Activated CD4-positive, alpha-beta T cell treated with anti-CD3 and anti-CD28 coated beads, Interleukin-2, amount 10 ng/mL, durations not matched to agents 24 days and 14 days (primary cell): ENCODE measurements at regions of chr15 and their contacts with region 1.

Region 1: DNA sequence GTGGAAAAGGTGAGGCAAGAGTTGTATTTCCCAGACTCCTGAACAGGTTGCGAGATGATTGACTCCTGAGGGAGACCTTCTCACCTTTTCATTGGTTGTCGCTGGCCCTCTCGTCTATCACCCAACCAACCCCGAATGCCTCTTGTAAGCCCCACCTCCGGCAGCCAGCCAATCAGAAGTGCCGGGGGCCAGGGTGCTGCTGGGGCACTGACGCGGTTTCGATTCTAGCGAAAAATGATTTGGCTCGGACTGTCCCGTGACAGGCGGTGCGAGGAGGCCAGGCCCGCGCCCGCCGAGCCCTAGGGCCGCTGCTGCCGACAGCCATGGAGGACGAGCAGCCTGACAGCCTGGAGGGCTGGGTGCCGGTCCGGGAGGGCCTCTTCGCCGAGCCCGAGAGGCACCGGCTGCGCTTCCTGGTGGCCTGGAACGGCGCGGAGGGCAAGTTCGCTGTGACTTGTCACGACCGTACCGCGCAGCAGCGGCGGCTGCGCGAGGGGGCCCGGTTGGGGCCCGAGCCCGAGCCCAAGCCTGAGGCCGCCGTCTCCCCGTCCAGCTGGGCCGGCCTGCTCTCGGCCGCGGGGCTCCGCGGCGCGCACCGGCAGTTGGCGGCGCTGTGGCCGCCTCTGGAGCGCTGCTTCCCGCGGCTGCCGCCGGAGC is at the start of gene WHAMM:
- DNase-seq: peak; percentile 99
- H3K4me3 Mint-ChIP-seq: peak within 1 kb of the TSS; percentile 88
- H3K27ac Mint-ChIP-seq: peak within 1 kb of the TSS; percentile 95
- H3K4me1 Mint-ChIP-seq: peaks cover 20% of the 10 kb centered on the region
- H3K27me3 Mint-ChIP-seq: peaks cover 14% of the 10 kb centered on the region
- total RNA-seq, gene WHAMM: 5.1 and 6.7 TPM in 2 replicates

Region 2: DNA sequence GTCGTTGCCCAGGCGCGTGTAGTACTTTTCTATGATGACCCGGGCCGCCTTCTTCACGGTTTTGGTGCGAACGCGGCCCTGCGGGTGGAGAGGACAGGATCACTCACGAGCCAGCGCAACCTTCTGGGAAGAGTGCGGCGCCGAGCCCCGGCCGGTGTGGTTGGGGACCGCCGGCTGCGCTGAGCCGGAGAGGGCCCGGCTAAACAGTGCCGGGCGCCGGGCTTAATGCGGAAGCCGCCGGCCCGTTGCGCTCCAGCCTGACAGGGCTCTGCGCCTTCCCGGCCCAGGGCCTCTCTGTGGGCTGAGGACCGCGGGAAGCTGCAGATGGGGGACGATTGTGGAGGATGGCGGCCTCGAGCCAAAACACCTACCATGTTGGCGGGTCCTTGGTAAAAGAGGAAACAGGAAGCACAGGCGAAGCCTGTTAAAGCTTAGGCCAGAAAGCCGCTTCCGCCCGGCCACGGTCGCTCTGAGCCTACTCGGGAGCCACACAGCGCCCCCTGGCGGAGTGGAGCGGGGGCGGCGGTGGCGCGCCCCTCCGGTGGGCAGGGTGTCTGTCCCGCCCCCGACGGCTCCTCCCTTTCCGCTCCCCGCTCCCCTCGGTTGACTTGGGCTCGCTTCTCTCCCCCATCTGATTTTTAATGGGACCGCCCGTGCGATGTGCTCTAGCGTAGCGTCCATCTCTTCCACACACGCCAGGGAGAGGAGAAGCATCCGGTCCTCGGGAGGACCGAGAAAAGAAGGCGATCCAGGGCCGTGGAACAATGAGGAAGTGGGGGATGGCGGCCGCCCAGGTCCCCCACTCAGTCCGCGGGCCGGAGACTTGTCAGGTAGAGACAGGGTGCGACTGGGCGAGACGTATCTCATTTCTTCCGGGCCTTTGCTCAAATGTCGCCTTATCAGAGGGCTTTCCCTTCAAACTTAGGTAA is 269.2 kb before region 1 on chr15 and contains the start of gene RPS17:
- intact Hi-C with region 1: loop called (anchors 1 kb)
- DNase-seq: peak; percentile 100
- H3K4me3 Mint-ChIP-seq: peak within 1 kb of the TSS; percentile 86
- H3K27ac Mint-ChIP-seq: peak within 1 kb of the TSS; percentile 92
- H3K4me1 Mint-ChIP-seq: peaks cover 34% of the 10 kb centered on the region
- H3K27me3 Mint-ChIP-seq: peaks cover 9% of the 10 kb centered on the region
- total RNA-seq, gene RPS17: 2,675 and 2,728 TPM in 2 replicates

Region 3: GRCh38 chr15:82749951-82750830 is 59.3 kb before region 1 on chr15:
- intact Hi-C with region 1: loop called (anchors 1 kb)
- DNase-seq: peak; percentile 96
- H3K4me3 Mint-ChIP-seq: peak overlapping the region; percentile 99
- H3K27ac Mint-ChIP-seq: peak overlapping the region; percentile 97
- H3K4me1 Mint-ChIP-seq: peaks cover 23% of the 10 kb centered on the region
- H3K27me3 Mint-ChIP-seq: no peaks in the 10 kb centered on the region

Region 4: GRCh38 chr15:82792068-82792467 is 17.5 kb before region 1 on chr15:
- intact Hi-C with region 1: no loop called
- DNase-seq: no peak
- H3K4me3 Mint-ChIP-seq: no peak overlapping the region
- H3K27ac Mint-ChIP-seq: no peak overlapping the region
- H3K4me1 Mint-ChIP-seq: no peaks in the 10 kb centered on the region
- H3K27me3 Mint-ChIP-seq: peaks cover 15% of the 10 kb centered on the region

Region 5: GRCh38 chr15:82952158-82953081 is 142.9 kb after region 1 on chr15 and contains the start of gene HOMER2:
- intact Hi-C with region 1: loop called (anchors 1 kb)
- DNase-seq: peak; percentile 75
- H3K4me3 Mint-ChIP-seq: peak within 1 kb of the TSS; percentile 67
- H3K27ac Mint-ChIP-seq: peak within 1 kb of the TSS; percentile 80
- H3K4me1 Mint-ChIP-seq: peaks cover 2% of the 10 kb centered on the region
- H3K27me3 Mint-ChIP-seq: peaks cover 19% of the 10 kb centered on the region
- total RNA-seq, gene HOMER2: 29.3 and 32.1 TPM in 2 replicates

Region 6: DNA sequence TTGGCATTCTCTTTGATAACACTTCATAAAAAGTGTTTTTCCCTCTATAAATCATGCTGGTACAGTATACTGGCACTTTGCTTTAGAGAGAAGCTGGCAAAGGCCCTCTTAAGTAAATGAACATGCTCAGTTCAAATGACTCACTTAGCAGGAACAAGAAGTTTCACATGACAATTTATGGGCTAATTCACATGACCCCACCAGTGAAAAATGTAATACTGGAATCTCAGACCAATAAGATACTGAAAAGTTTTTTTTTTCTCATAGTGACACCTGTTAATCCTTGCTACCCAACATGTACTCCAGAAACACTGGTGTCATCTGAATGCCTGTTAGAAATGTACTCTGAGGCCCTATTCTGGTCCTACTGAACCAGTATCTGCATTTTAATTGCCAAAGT is 243.6 kb after region 1 on chr15:
- intact Hi-C with region 1: no loop called
- DNase-seq: peak; percentile 19
- H3K4me3 Mint-ChIP-seq: no peak overlapping the region
- H3K27ac Mint-ChIP-seq: no peak overlapping the region
- H3K4me1 Mint-ChIP-seq: peaks cover 15% of the 10 kb centered on the region
- H3K27me3 Mint-ChIP-seq: no peaks in the 10 kb centered on the region

Region 7: DNA sequence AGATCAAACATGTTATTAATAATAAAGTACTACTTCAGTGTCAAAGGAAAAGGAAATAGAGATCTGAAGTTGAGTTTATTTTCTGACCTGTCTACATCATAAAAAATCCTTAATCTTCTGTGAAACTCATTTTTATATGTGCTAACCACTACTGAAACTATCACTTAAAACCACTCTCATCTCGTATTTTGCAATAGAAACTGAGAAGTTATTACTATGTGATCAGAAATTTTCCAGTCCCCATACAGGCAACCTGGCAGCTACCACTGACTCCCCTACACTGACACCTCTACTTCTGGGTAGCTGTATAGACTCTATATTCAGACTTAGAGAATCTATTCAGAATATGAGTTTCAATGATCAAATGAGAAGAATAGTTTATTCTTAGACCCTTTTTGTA is 389.8 kb after region 1 on chr15:
- intact Hi-C with region 1: loop called (anchors 2 kb)
- DNase-seq: no peak
- H3K4me3 Mint-ChIP-seq: peak overlapping the region; percentile 34
- H3K27ac Mint-ChIP-seq: peak overlapping the region; percentile 93
- H3K4me1 Mint-ChIP-seq: peaks cover 36% of the 10 kb centered on the region
- H3K27me3 Mint-ChIP-seq: peaks cover 28% of the 10 kb centered on the region